WTC11 (cell line): ENCODE measurements at regions of chr10 and their contacts with region 1.

Region 1: GRCh38 chr10:35218339-35218955 is 91.8 kb downstream of the CREM start:
- DNase-seq: peak; percentile 81
- ATAC-seq: peak; percentile 66
- H3K4me3 Mint-ChIP-seq: no peak overlapping the region
- H3K27ac Mint-ChIP-seq: no peak overlapping the region
- H3K4me1 Mint-ChIP-seq: no peaks in the 10 kb centered on the region
- H3K27me3 Mint-ChIP-seq: no peaks in the 10 kb centered on the region
- CTCF ChIP-seq: peak; percentile 74

Region 2: DNA sequence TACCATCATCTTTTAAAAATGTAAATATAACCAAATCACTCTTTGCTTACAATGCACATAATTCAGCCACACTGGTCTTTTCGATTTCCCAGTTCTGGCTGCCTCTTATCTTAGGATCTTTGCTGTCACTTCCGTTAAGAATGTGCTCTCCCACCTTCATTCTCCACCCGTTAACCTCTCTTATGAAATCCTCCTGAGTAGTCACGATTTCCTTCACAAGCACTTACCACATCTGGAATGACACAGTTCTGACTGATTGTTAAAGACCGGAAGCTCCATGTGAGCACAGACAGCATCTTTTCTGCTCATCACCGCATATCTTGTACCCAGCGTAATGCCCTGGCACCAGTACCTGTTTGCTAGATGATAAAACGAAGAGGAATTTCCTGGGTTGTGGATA is 212.6 kb before region 1 on chr10:
- CTCF ChIA-PET with region 1: no interaction called
- POLR2A ChIA-PET with region 1: no interaction called
- DNase-seq: no peak
- ATAC-seq: no peak
- H3K4me3 Mint-ChIP-seq: no peak overlapping the region
- H3K27ac Mint-ChIP-seq: no peak overlapping the region
- H3K4me1 Mint-ChIP-seq: peaks cover 25% of the 10 kb centered on the region
- H3K27me3 Mint-ChIP-seq: no peaks in the 10 kb centered on the region
- CTCF ChIP-seq: no peak

Region 3: DNA sequence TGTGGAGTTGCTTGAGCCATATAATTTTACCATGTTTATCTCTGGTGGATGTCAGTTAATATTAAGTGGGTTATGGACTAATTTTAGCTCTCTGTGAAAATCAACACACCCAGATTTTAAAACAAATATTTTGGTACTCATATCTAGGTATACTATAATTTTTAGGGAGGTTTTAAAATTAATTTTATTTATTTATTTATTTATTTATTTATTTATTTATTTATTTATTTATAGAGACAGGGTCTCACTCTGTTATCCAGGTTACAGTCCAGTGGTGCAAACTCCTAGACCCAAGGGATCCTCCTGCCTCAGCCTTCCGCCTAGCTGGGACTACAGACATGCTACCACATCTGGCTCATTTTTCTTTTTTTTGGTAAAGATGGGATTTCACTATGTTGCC is 99.1 kb before region 1 on chr10:
- CTCF ChIA-PET with region 1: interaction called, 18 read pairs
- POLR2A ChIA-PET with region 1: no interaction called
- DNase-seq: no peak
- ATAC-seq: no peak
- H3K4me3 Mint-ChIP-seq: no peak overlapping the region
- H3K27ac Mint-ChIP-seq: no peak overlapping the region
- H3K4me1 Mint-ChIP-seq: no peaks in the 10 kb centered on the region
- H3K27me3 Mint-ChIP-seq: no peaks in the 10 kb centered on the region
- CTCF ChIP-seq: no peak

Region 4: DNA sequence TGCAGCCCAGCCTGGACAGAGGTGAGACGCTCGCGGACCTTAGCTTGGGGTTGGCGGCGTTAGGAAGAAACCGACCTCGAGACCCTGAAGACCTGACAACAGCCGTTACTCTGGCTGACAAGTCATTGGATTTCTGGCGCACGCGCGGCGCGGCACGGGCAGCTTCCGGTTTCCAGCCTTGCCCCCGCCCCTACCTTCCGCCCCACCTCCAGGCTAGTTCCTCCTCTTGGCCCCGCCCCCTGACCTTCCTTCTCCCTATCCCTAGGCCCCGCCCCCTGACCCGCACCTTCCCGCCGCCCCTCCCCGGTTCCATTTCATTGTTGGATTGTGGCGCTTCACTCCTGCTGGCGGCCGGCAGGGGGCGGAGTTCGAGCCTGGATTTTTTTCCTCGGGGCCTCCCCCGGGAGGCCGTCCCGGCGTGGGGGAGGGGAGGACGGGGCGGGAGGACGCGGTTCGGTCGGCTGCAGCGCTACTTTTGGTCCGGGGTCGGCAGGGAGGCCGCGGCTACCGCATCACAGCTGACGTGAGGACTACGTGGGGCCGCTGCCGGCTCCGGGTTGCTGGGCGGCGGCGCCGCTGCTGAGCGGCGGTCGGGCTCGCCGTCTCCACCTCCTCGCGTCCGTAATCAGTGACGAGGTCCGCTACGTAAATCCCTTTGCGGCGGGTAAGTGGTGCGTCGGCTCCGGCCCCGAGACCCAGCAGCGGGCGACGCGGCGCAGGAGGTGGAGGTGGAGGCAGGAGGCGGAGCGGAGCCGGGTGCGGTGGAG is 91.7 kb before region 1 on chr10 and contains the start of gene CREM:
- CTCF ChIA-PET with region 1: interaction called, 18 read pairs
- POLR2A ChIA-PET with region 1: no interaction called
- DNase-seq: peak; percentile 99
- ATAC-seq: peak; percentile 94
- H3K4me3 Mint-ChIP-seq: peak within 1 kb of the TSS; percentile 87
- H3K27ac Mint-ChIP-seq: peak within 1 kb of the TSS; percentile 97
- H3K4me1 Mint-ChIP-seq: peaks cover 13% of the 10 kb centered on the region
- H3K27me3 Mint-ChIP-seq: no peaks in the 10 kb centered on the region; the same call in 1 of the 2 replicates
- CTCF ChIP-seq: peak; percentile 94
- total RNA-seq, gene CREM: 17.3 to 23.6 TPM (median 18.3 TPM) in 3 replicates